Esophagus muscularis mucosa (tissue), 4 donors: ENCODE measurements at regions of chr1 and their contacts with region 1.

Region 1: GRCh38 chr1:42335050-42335808 is at the start of gene FOXJ3:
- DNase-seq: peak; percentile 94
- H3K4me3 ChIP-seq: peak within 1 kb of the TSS; percentile 90 to 99 (median 92)
- H3K27ac ChIP-seq: peak within 1 kb of the TSS; percentile 92 to 97 (median 96)
- H3K4me1 ChIP-seq: peaks cover 28 to 46% (median 42%) of the 10 kb centered on the region in 4 donors
- H3K27me3 ChIP-seq: no peaks in the 10 kb centered on the region
- CTCF ChIP-seq: peak in 1 of 3 experiments; percentile 27
- EP300 ChIP-seq: no peak
- POLR2A ChIP-seq: no peak
- total RNA-seq, gene FOXJ3: 34.5 to 40.0 (median 36.1) TPM

Region 2: DNA sequence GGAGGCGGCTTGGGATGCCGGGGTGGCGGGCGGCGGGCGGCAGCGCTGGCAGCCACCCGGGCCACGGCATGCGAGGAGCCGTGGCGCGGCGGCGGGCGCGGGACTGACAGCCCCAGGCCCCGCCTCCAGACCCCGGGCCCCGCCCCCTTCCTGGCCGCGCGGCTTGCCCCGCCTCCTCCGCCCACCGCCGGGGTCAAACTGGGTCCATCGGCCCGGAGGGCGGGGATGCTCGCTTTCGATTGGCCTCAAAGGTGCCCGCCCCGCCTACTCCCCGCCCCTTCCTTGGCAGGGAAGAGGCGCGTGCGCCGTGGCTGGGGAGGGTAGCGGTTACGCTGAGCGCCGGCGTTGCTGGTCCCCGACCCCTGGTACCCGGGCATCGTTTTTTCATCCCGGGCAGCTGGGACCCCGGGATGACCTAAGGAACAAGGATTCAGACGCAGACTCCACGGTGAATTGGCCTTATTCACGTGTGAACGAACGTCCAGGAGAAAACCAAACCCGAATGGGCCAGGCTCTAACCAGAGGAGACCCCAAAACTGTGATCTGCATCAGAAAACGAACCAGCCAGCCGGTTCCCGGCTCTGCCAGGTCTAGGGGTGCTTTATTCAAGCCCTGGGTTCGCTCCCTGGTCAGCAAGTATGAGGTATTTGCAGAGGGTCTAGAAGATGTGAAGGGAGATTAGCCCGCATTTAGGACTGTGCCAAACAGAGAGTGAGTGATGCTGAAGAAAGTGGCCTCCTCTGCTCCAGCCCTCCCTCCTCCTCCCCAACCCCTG is 299.2 kb before region 1 on chr1:
- intact Hi-C with region 1: loop called (anchors 10 kb)
- DNase-seq: peak; percentile 98
- H3K4me3 ChIP-seq: peak overlapping the region; percentile 77 to 93 (median 84)
- H3K27ac ChIP-seq: peak overlapping the region; percentile 73 to 79 (median 76)
- H3K4me1 ChIP-seq: peaks cover 13 to 16% (median 16%) of the 10 kb centered on the region in 4 donors
- H3K27me3 ChIP-seq: no peaks in the 10 kb centered on the region
- CTCF ChIP-seq: peak in 1 of 3 experiments; percentile 0
- EP300 ChIP-seq: no peak
- POLR2A ChIP-seq: no peak

Region 3: GRCh38 chr1:42173155-42173933 is 161.9 kb before region 1 on chr1:
- intact Hi-C with region 1: loop called (anchors 5 kb)
- DNase-seq: no peak
- H3K4me3 ChIP-seq: no peak overlapping the region
- H3K27ac ChIP-seq: no peak overlapping the region
- H3K4me1 ChIP-seq: peaks cover 18 to 31% (median 19%) of the 10 kb centered on the region in 4 donors
- H3K27me3 ChIP-seq: peaks cover 0 to 14% (median 0%) of the 10 kb centered on the region in 4 donors
- CTCF ChIP-seq: peak; percentile 89 to 99 (median 92)
- EP300 ChIP-seq: no peak
- POLR2A ChIP-seq: no peak

Region 4: GRCh38 chr1:42403880-42404400 is 68.7 kb after region 1 on chr1:
- intact Hi-C with region 1: no loop called
- DNase-seq: no peak
- H3K4me3 ChIP-seq: no peak overlapping the region
- H3K27ac ChIP-seq: no peak overlapping the region
- H3K4me1 ChIP-seq: no peaks in the 10 kb centered on the region
- H3K27me3 ChIP-seq: no peaks in the 10 kb centered on the region
- CTCF ChIP-seq: no peak
- EP300 ChIP-seq: no peak
- POLR2A ChIP-seq: no peak

Region 5: DNA sequence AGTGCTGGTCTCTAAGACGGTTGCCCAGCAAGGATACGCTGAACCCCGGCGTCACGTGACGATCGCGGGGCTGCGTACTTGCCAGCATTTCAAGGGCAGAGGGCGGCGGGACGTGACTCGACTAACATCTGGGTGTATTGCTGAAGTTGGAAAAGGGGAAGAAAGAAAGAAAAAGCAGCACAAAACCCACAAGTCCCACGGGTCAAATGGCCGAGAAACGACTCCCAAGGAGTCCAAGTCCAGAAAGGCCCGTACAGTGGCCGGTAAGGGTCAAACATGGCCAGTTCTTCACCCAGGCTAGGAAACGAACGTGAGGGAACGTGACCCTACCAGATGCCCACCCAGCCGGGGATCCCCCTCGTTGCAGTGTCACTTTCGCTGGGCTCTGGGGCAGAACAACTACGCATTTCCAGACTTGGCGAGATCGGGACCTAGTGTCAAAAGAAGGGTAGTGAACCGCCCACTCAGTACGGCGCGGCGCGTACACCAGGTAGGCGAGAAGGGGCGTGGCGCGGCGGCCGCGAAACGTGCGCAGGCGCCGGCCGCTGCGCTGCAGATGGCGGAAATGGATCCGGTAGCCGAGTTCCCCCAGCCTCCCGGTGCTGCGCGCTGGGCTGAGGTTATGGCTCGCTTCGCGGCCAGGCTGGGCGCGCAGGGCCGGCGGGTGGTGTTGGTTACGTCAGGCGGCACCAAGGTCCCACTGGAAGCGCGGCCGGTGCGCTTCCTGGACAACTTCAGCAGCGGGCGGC is 121.0 kb after region 1 on chr1 and contains the starts of genes PPCS and ZMYND12:
- intact Hi-C with region 1: loop called (anchors 5 kb)
- DNase-seq: peak; percentile 95
- H3K4me3 ChIP-seq: peak within 1 kb of the TSS; percentile 73 to 95 (median 88)
- H3K27ac ChIP-seq: peak within 1 kb of the TSS; percentile 86 to 93 (median 90)
- H3K4me1 ChIP-seq: peaks cover 14 to 25% (median 24%) of the 10 kb centered on the region in 4 donors
- H3K27me3 ChIP-seq: no peaks in the 10 kb centered on the region
- CTCF ChIP-seq: peak in 1 of 3 experiments; percentile 21
- EP300 ChIP-seq: no peak
- POLR2A ChIP-seq: peak; percentile 46
- total RNA-seq, gene PPCS: 59.1 to 105 (median 90.6) TPM
- total RNA-seq, gene ZMYND12: 0.23 to 1.7 (median 0.78) TPM in 3 of 4 donors, not detected in the other

Region 6: GRCh38 chr1:42681741-42682483 is 346.7 kb after region 1 on chr1 and contains the start of gene YBX1:
- intact Hi-C with region 1: loop called (anchors 10 kb)
- DNase-seq: peak; percentile 100
- H3K4me3 ChIP-seq: peak within 1 kb of the TSS; percentile 95 to 98 (median 96)
- H3K27ac ChIP-seq: peak within 1 kb of the TSS; percentile 96 to 99 (median 98)
- H3K4me1 ChIP-seq: peaks cover 50 to 56% (median 53%) of the 10 kb centered on the region in 4 donors
- H3K27me3 ChIP-seq: no peaks in the 10 kb centered on the region
- CTCF ChIP-seq: no peak
- EP300 ChIP-seq: no peak
- POLR2A ChIP-seq: peak; percentile 69
- total RNA-seq, gene YBX1: 778 to 889 (median 812) TPM